Sigmoid colon (tissue), 7 donors: ENCODE measurements at regions of chr4 and their contacts with region 1.

Region 1: DNA sequence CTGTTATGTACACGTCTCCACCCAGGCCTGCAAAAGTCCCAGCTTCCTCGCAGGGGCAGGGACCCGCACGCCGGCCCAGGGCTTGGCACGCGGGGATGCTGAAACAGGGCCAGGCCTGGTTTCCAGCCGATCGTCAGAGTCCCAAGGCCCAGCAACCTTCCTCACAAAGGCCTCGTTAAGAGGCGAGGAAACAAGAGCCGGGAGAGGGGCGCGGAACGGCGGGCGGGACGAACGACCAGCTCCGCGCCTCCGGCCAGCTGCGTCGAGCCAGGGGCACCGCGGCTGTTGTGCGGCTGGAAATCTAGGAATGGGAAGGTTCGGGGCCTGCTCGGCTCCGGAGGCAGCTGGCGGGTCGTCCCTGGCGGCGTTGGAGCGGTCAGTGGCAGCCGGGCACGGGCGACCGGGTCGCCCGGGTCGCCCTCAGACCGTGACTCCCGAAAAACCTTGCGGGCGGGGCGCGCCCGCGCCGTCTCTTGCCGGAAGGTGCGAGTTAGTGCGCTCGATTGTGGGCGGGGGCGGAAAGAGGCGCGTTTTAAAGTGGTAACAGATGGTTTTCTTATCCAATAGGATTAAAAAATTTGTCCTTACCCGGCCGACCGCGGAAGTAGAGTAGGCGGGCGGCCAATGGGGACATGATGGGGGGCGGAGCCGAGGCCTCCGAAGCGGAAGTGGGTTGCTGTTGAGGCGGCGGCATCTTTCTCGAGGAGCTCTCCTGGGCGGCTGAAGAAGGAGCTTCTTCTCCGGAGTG is at the start of gene RNF4:
- DNase-seq: peak; percentile 98
- H3K4me3 ChIP-seq: peak within 1 kb of the TSS; percentile 84 to 93 (median 86)
- H3K27ac ChIP-seq: peak within 1 kb of the TSS; percentile 89 to 98 (median 94)
- H3K4me1 ChIP-seq: peaks cover 0 to 34% (median 27%) of the 10 kb centered on the region in 4 donors
- H3K27me3 ChIP-seq: no peaks in the 10 kb centered on the region
- CTCF ChIP-seq: no peak
- EP300 ChIP-seq: no peak
- POLR2A ChIP-seq: peak in 1 of 2 donors; percentile 56
- total RNA-seq, gene RNF4: 28.5 to 51.0 (median 40.4) TPM

Region 2: DNA sequence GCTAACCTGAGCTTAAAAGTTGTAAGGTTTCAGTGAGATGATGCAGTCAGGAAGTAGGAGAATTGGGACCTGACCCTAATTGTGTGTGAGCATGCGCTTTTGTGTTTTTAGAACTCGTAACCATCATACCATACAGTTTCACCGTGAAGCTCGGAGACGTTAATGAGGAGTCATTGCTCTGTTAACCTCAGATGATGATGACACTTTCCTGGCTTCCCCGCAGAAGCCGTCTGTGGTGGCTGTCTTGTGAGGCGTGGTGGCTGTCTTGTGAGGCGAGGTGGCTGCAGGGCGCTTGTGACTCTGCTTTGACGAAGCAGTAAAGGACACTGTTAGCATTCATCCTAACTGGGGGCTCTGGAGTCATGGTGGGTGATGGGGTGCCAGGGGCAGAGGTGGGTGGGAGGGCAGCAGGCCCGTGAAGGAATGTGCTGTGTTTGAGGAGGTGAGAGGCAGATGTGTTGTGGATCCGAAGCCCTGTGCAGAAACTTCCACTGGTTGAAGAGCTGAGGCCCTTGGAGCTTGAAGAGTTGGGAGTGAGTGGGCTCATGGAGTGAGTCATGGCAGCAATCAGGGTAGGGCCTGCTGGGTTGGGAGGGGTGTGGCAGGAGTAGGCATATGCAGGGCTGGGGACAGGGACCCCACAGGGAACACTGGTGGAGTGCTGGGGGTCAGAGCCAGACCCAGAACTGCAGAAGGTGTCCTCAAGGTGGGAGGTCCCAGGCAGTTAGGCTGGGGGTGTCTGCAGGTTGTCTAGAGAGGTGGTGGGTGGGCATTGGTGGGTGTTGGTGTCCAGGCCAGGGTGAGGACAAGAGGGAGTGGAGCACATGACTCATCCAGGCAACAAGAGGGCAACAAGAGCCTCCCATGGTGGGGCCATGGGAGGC is 540.0 kb before region 1 on chr4:
- intact Hi-C with region 1: no loop called
- DNase-seq: no peak
- H3K4me3 ChIP-seq: no peak overlapping the region
- H3K27ac ChIP-seq: no peak overlapping the region
- H3K4me1 ChIP-seq: no peaks in the 10 kb centered on the region
- H3K27me3 ChIP-seq: no peaks in the 10 kb centered on the region
- CTCF ChIP-seq: no peak
- EP300 ChIP-seq: no peak
- POLR2A ChIP-seq: no peak

Region 3: DNA sequence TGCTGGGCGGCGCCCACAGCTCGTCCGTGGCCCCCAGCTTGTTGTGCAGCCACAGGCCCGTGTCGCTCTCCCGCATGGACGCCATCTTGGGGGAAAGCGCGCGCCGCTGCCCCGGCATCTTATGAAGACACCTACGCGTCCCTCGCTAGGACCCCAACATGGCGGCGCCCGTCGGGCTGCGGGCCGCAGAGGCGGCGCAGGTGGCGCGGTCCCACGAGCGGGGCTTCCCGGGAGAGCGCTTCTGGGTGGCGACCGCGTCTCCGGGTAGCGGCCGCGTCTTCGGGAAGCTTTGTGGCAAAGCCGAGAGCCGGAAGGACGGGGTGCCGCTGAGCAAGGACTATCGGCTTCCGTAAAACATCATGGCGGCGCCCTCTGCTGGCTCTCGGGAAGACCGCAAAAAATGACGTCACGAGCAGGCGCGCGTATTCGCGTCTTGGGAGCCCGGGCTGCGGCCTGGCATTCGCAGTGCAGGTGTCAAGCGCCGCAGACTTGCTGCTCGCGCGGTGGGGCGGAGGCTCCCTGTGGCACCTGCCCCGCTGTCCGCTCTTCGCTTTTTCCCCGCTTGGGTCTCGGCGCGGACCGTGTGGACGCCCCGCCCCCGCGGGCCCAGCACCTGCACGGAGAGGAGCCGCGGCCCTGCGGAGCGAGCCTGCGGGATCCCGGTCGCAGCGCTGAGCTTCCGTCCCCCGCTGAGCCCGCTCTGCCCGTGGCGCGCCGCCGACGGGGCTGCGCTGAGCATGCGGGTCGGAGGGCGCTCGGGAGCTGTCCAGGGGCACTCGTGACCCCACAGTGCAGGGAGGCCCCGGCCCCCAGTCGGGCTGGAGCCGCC is 459.5 kb before region 1 on chr4 and contains the start of gene NELFA:
- intact Hi-C with region 1: loop called (anchors 2 kb)
- DNase-seq: peak; percentile 97
- H3K4me3 ChIP-seq: peak within 1 kb of the TSS; percentile 75 to 99 (median 88)
- H3K27ac ChIP-seq: peak within 1 kb of the TSS; percentile 92 to 99 (median 96)
- H3K4me1 ChIP-seq: peaks cover 0 to 33% (median 22%) of the 10 kb centered on the region in 4 donors
- H3K27me3 ChIP-seq: no peaks in the 10 kb centered on the region
- CTCF ChIP-seq: peak in 3 of 4 experiments; percentile 40 to 69 (median 44)
- EP300 ChIP-seq: no peak
- POLR2A ChIP-seq: peak; percentile 57 to 76
- total RNA-seq, gene NELFA: 14.3 to 19.3 (median 17.1) TPM

Region 4: DNA sequence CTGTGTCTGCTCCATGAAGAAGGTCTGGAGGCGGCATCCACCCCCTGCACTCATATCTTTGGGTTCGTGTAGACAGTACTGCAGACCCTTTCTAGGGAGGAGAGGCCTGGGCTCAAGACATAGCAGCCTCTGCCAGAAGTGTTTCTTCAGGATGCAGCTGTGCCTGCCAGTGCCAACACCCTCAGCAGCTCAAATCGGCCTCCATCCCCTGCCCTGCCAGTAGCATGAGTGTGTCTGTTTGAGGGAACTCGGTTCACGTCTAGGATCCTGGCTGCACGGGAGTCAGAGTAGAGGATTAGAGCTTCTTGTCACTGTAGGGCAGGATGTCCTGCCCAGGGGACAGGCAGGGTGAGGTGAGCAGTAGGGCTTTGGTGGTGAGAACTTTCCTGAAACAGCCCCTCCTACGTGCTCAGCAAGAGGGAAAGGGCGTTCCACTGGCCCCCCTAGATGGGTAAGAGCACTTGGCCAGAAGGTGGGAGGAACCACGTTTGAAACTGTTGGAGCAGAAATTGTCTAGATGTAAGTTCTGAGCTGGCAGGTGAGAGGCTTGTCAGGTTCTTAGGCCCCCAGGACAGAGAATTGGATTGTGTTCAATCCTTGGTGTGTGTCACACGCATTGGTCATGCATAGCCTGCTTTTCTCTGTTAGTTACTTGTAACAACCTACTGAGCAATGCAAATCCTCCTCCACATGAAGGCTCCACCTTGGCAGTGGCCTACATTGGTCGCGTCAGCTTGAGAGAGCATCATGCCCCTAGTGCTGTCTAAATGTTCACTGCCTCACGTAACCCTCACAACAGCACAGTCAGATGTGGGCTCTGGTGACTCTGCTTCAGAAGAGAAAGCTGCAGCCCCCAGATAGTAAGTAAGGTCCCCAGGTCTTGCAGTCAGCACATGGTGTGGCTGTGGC is 42.0 kb after region 1 on chr4:
- intact Hi-C with region 1: no loop called
- DNase-seq: no peak
- H3K4me3 ChIP-seq: no peak overlapping the region
- H3K27ac ChIP-seq: no peak overlapping the region
- H3K4me1 ChIP-seq: peaks cover 0 to 3% (median under 1%) of the 10 kb centered on the region in 4 donors
- H3K27me3 ChIP-seq: no peaks in the 10 kb centered on the region
- CTCF ChIP-seq: no peak
- EP300 ChIP-seq: no peak
- POLR2A ChIP-seq: no peak

Region 5: DNA sequence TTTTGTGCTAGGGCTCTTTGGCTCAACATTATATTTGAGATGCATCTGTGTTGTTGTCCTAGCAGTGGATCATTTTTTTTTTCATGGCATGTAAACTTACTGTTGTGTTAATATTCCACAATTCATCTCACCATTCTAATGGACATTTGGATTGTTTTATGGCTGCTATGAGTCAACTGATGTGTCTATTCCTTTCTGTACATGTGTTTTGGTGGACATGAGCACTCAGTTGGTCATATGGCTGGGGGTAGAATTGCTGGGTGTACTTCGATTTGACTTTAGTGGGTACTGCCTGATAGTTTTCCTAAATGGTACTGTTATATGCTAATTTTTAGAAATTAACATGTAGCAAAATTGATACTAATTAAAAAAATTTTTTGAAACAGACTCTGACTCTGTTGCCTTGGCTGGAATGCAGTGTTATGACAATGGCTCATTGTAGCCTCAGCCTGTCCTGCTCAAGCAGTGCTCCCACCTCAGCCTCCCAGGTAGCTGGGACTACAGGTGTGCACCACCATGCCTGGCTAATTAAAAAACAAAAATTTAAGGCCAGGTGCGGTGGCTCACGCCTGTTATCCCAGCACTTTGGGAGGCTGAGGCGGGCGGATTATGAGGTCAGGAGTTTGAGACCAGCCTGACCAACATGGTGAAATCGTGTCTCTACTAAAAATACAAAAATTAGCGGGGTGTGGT is 76.8 kb after region 1 on chr4:
- intact Hi-C with region 1: no loop called
- DNase-seq: no peak
- H3K4me3 ChIP-seq: no peak overlapping the region
- H3K27ac ChIP-seq: no peak overlapping the region
- H3K4me1 ChIP-seq: peaks cover 0 to 24% (median 8%) of the 10 kb centered on the region in 4 donors
- H3K27me3 ChIP-seq: no peaks in the 10 kb centered on the region
- CTCF ChIP-seq: no peak
- EP300 ChIP-seq: no peak
- POLR2A ChIP-seq: no peak

Region 6: GRCh38 chr4:2637956-2638552 is 169.4 kb after region 1 on chr4:
- intact Hi-C with region 1: no loop called
- DNase-seq: peak; percentile 56
- H3K4me3 ChIP-seq: no peak overlapping the region
- H3K27ac ChIP-seq: no peak overlapping the region
- H3K4me1 ChIP-seq: no peaks in the 10 kb centered on the region
- H3K27me3 ChIP-seq: no peaks in the 10 kb centered on the region
- CTCF ChIP-seq: no peak
- EP300 ChIP-seq: no peak
- POLR2A ChIP-seq: no peak